Activated naive CD4-positive, alpha-beta T cell treated with anti-CD3 and anti-CD28 coated beads for 36 hours (primary cell): ENCODE measurements at regions of chr12 and their contacts with region 1.

Region 1: GRCh38 chr12:110449799-110450497 is at the start of gene ARPC3:
- DNase-seq: peak; percentile 98
- H3K4me3 Mint-ChIP-seq: peak within 1 kb of the TSS; percentile 100
- H3K27ac Mint-ChIP-seq: peak within 1 kb of the TSS; percentile 100
- H3K4me1 Mint-ChIP-seq: peaks cover 38% of the 10 kb centered on the region
- H3K27me3 Mint-ChIP-seq: no peaks in the 10 kb centered on the region
- total RNA-seq, gene ARPC3: 279 to 311 TPM

Region 2: GRCh38 chr12:110403146-110403975 is 46.6 kb before region 1 on chr12 and contains the start of gene ANAPC7:
- CTCF ChIA-PET with region 1: no interaction called
- intact Hi-C with region 1: loop called (anchors 1 kb)
- DNase-seq: peak; percentile 92
- H3K4me3 Mint-ChIP-seq: peak within 1 kb of the TSS; percentile 98
- H3K27ac Mint-ChIP-seq: peak within 1 kb of the TSS; percentile 99
- H3K4me1 Mint-ChIP-seq: peaks cover 27% of the 10 kb centered on the region
- H3K27me3 Mint-ChIP-seq: no peaks in the 10 kb centered on the region
- total RNA-seq, gene ANAPC7: 51.2 to 61.2 TPM

Region 3: DNA sequence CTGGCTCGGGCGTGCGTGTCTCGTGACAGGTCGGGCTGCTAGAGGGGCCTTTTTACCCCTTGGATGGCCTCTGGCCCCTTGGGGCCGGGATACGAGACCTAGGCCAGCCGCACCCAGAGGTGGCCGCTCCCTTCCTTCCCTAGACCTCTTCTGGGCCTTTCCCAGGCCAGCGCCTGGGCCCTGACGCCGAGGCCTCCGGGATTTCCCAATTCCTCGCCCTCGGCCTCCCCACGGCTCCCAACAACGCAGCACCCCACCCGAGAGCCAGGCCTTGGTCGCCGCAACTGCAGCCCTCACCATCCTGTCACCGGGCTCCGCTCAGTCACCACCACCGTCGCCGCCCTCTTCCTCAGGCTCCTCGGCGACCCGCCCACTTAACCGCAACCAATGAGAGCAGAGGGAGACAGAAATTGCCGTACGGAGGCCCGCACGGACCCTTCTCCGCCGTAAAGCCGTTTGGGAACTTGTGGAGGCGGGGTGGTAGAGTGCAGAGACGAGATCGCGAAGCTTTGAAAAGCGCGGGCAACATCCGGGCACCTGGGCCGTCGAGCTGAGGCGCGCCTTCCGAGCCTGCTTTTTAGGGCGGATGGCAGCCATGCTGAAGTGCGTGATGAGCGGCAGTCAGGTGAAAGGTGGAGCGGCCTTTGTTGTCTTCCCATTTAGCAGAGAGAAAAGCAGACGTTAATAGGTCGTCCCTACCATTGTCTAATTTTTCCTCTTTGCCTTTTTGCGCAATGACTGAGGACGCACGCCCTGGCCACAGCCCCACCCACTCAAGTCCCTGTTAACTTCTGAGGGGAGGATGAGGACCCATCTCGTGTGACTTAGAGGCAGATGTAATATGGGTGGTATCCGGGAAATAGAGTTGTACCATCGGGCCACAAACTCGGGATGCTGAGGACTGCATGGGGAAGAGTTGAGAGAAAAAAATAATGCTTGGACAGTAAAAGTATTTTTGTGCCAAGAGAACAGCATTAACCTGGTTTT is 52.1 kb after region 1 on chr12 and contains the starts of genes RAD9B and VPS29:
- CTCF ChIA-PET with region 1: interaction called, 7 read pairs
- intact Hi-C with region 1: loop called (anchors 1 kb)
- DNase-seq: peak; percentile 100
- H3K4me3 Mint-ChIP-seq: peak within 1 kb of the TSS; percentile 94
- H3K27ac Mint-ChIP-seq: peak within 1 kb of the TSS; percentile 96
- H3K4me1 Mint-ChIP-seq: peaks cover 32% of the 10 kb centered on the region
- H3K27me3 Mint-ChIP-seq: no peaks in the 10 kb centered on the region
- total RNA-seq, gene RAD9B: 1.1 to 1.5 TPM
- total RNA-seq, gene VPS29: 76.6 to 81.8 TPM

Region 4: GRCh38 chr12:110555577-110556406 is 105.8 kb after region 1 on chr12:
- CTCF ChIA-PET with region 1: no interaction called
- intact Hi-C with region 1: loop called (anchors 1 kb)
- DNase-seq: no peak
- H3K4me3 Mint-ChIP-seq: no peak overlapping the region
- H3K27ac Mint-ChIP-seq: no peak overlapping the region
- H3K4me1 Mint-ChIP-seq: peaks cover 60% of the 10 kb centered on the region
- H3K27me3 Mint-ChIP-seq: no peaks in the 10 kb centered on the region

Region 5: DNA sequence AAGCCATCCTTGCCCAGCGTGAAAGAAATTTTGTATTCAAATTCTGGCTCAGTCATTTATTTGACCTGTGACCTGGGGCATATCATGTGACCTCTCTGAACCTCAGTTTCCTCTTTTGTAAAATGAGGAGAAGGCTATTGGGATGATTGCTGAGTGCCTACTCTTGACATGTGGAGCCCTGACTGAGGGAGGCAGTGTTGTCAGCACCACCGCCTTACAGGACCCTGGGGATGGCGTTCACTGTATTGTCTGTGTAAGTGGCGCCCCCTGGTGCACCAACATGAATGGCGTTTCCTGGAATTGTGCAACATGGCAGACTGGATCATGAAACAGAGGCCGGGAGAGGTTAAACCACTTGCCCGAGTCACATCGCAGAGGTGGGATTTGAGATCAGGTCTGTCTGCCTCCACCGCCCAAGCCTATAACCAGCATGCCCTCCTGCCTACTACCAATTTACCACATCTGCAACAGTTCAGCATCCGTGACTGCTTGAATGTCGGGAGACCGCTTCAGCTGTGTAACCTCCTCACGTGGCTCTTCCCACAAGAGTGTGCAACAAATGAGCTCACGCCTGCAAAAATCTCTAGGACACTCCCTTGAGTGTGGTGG is 376.7 kb after region 1 on chr12:
- CTCF ChIA-PET with region 1: no interaction called
- intact Hi-C with region 1: loop called (anchors 1 kb)
- DNase-seq: peak; percentile 97
- H3K4me3 Mint-ChIP-seq: peak overlapping the region; percentile 7
- H3K27ac Mint-ChIP-seq: peak overlapping the region; percentile 50
- H3K4me1 Mint-ChIP-seq: peaks cover 15% of the 10 kb centered on the region
- H3K27me3 Mint-ChIP-seq: no peaks in the 10 kb centered on the region